H1 (cell line): ENCODE measurements at regions of chr10 and their contacts with region 1.

Region 1: DNA sequence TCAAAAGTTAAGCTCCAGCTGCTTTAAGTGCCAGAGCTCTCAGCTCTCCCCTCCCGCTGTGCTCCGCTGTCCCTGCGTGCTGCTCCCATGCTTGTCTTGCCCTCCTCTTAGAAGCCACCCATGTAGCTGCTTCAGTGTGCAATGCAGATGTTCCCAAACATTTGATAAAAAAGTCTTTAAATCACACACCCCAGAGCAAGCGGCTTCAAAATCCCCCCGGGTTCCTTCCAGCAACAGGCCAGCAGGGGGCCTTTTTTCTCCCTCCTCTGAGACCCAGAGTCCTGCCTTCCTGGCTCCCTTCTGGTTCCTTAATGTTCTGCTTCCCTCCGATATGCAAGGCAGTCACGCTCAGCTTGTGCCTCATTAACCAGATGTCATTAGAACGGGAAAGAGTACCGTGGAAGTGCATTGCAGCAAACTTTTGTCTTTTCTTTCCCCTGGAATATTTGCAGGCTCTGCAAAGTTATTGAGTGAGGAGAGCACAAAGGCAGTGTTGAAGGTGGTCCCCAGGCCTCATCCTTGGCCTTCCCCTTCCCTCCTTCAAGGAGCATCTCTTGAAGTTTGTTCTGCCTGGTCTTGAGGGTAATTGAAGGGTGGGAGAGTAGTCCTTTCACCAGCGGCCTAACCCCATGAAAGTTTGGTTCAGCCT is 25.5 kb downstream of the LDB3 start:
- DNase-seq: peak in 1 of 2 experiments; percentile 74
- H3K4me3 ChIP-seq: no peak overlapping the region
- H3K27ac ChIP-seq: no peak overlapping the region
- H3K4me1 ChIP-seq: peaks cover 3 to 15% (median 4%) of the 10 kb centered on the region in 4 experiments
- H3K27me3 ChIP-seq: 0 out of 7 replicates have a peak, but pooled peaks cover 0 to 3% (median 0%) of the 10 kb centered on the region in 4 experiments
- CTCF ChIP-seq: peak; percentile 40 to 55 (median 50)
- EP300 ChIP-seq: no peak
- POLR2A ChIP-seq: no peak
- RAD21 ChIP-seq: peak; percentile 54 to 57

Region 2: DNA sequence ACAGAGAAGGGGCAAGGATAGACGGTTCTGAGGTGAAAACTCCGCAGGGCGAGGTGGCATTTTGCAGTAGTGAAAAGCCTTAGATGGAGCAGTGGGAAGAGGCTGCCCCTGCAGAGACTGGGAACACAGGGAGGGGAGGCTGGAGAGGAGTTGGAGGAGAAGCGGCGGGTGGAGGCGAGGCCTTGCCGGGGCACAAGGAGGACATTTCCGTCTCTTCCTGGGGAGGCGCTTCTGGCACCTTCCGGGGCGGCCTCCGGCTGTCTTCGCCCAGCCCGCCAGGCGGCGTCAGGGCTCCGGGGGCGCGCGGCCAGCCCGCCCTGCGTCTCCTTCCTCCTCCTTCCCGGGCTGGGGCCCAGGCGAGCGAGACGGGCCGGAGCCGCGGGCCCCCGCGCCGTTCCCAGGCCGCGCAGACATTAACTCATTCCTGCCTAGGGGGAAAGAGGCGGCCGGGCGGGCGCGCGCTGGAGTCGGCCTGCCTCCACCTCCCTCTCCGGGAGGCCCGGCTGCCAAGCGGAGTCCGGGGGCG is 17.2 kb after region 1 on chr10:
- CTCF ChIA-PET with region 1: interaction called, 59 read pairs
- POLR2A ChIA-PET with region 1: interaction called, 4 read pairs
- DNase-seq: peak; percentile 68 to 92
- H3K4me3 ChIP-seq: peak overlapping the region; percentile 46 to 67 (median 54)
- H3K27ac ChIP-seq: no peak overlapping the region; the same call in 1 of the 2 replicates
- H3K4me1 ChIP-seq: peaks cover 3 to 28% (median 12%) of the 10 kb centered on the region in 4 experiments
- H3K27me3 ChIP-seq: no peaks in the 10 kb centered on the region
- CTCF ChIP-seq: peak; percentile 68 to 97 (median 80)
- EP300 ChIP-seq: no peak
- POLR2A ChIP-seq: peak in 1 of 2 experiments; percentile 64; a peak in 2 of 3 replicates
- RAD21 ChIP-seq: peak; percentile 72 to 80

Region 3: GRCh38 chr10:86905429-86905828 is 211.6 kb after region 1 on chr10:
- CTCF ChIA-PET with region 1: interaction called, 40 read pairs
- POLR2A ChIA-PET with region 1: interaction called, 3 read pairs
- DNase-seq: no peak
- H3K4me3 ChIP-seq: no peak overlapping the region
- H3K27ac ChIP-seq: no peak overlapping the region
- H3K4me1 ChIP-seq: no peaks in the 10 kb centered on the region
- H3K27me3 ChIP-seq: no peaks in the 10 kb centered on the region
- CTCF ChIP-seq: no peak
- EP300 ChIP-seq: no peak
- POLR2A ChIP-seq: no peak
- RAD21 ChIP-seq: no peak

Region 4: DNA sequence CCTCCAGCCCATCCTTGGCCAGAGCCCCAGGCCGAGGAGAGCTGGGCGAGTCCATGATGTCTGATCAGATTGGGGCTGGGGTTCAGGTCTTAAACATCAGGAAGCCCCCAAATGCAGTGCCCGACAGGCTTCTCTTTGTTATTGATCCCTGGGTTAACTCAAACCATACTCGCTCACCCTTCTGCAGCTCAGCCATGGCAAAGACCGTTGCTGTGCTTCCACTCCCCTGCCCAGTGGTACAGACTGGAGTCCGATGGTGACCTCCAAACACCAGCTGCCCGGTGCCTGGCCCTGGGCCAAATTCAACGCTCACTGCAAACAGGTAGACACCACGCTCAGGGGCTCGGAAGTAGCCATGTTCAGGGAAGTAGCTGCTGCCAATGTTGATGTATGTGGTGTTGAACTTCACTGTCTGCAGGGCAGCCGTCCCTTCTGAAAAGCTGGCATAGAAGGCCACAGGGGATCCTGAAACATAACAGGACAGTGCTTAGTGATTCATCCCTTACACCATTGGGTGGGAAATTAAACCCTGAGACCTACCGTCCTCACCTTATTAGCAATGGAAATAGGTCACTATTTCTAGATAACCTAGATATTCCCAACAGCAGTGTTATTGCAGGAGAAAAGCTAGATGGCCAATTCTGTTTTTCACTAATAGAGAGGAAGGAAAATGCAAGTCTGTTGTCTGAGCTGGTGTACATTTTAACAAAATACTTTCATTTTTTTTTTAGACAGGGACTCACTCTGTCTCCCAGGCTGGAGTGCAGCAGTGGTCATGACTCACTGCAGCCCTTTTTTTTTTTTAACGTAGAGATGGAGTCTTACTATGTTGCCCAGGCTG is 243.0 kb after region 1 on chr10:
- CTCF ChIA-PET with region 1: interaction called, 36 read pairs
- POLR2A ChIA-PET with region 1: no interaction called
- DNase-seq: no peak
- H3K4me3 ChIP-seq: no peak overlapping the region
- H3K27ac ChIP-seq: no peak overlapping the region
- H3K4me1 ChIP-seq: no peaks in the 10 kb centered on the region; a peak in 1 of 7 replicates
- H3K27me3 ChIP-seq: 0 out of 7 replicates have a peak, but pooled peaks cover 0 to 3% (median 0%) of the 10 kb centered on the region in 4 experiments
- CTCF ChIP-seq: no peak
- EP300 ChIP-seq: no peak
- POLR2A ChIP-seq: no peak
- RAD21 ChIP-seq: no peak